CD14-positive monocyte (primary cell): ENCODE measurements at regions of chr6 and their contacts with region 1.

Region 1: DNA sequence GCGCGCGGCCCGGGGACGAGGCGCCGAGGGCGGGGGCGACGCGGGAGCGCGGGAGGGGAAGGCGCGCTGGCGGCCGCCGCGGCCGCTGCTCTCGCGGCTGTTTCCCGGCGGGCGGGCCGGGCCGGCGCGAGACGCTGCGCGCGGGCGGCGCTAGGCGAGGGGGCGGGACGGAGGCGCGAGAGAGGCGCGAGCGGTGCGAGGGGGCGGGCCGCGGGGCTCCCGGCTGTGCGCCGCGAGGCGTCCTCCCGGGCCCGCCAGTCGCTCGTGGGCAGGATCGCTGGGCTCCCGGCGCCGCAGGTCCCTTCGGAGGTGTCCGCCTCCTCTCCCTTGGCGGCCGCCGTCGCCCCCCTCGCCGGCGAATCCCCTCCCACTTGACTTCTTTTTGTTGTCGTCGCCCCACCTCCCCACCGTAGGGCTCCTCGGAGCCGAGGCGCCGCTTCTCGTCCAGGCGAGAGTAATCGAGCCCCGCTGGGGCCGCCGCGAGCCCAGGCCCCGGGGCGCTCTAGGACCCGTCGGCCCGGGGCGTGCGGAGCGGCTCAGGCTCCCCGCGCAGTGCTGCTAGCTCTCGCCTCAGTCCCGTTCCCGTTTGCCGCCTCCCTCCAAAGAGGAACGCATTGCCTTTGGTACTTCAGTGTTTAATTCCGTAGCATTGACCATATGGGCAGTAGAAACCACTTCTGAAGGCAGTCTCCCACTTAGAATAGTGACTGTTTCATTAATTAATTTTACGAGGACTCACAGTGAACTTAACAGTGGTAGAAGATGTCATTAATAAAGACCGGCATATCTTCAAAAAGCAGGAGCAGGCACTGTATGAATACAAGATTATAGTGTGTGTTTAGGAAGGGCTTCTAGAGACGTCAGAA is at the start of gene RANBP9:
- DNase-seq: peak; percentile 53 to 67 (median 65)
- H3K4me3 ChIP-seq: peak within 1 kb of the TSS; percentile 67 to 95 (median 85)
- H3K4me3 Mint-ChIP-seq: peak within 1 kb of the TSS; percentile 97 to 99
- H3K27ac ChIP-seq: peak within 1 kb of the TSS; percentile 86 to 92
- H3K27ac Mint-ChIP-seq: peak within 1 kb of the TSS; percentile 90 to 96 (median 94)
- H3K4me1 ChIP-seq: peaks cover 39 to 54% of the 10 kb centered on the region in 2 donors
- H3K4me1 Mint-ChIP-seq: peaks cover 56% of the 10 kb centered on the region
- H3K27me3 ChIP-seq: no peaks in the 10 kb centered on the region
- H3K27me3 Mint-ChIP-seq: peaks cover 0 to 2% (median 0%) of the 10 kb centered on the region in 3 donors
- CTCF ChIP-seq: no peak
- polyA plus RNA-seq, gene RANBP9: 1.8 to 26.1 (median 2.0) TPM

Region 2: DNA sequence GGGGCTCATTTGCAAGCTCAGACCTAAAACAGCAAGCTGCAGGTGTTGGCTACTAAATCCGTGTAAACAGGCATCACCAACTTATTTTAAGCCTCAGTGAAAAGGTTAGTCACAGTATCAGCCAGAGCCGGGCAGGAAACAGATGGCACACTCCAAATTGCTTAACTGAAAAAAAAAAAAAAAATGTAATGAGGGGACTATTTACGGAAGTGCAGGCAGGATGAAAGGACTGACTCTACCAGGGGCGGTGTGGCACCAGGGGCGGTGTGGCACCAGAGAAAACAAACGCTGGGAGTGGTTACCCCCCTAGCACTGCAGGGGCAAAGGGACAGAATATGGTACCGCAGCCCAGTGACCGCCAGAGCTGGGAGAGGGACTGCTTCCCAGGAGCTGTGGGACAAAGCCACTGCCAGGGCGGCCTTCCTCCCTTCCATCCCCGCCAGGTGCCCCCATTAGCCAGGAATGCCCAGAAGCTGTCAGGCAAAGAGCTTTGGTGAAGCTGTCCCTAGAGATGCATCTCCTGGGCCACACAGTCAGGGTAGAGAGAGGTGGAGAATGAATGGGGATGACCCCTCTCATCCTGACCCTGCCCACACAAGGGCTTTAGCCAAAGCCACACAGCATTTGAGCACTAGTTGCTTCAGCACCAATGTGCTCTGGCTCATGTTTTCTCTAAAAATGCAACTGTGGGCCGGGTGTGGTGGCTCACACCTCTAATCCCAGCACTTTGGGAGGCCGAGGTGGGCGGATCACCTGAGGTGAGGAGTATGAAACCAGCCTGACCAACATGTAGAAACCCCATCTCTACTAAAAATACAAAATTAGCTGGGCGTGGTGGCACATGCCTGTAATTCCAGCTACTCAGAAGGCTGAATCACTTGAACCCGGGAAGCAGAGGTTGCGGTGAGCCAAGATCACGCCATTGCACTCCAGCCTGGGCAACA is 185.0 kb before region 1 on chr6:
- intact Hi-C with region 1: no loop called
- DNase-seq: peak; percentile 83 to 90 (median 90)
- H3K4me3 ChIP-seq: no peak overlapping the region
- H3K4me3 Mint-ChIP-seq: peak overlapping the region in 1 of 2 donors; percentile 51
- H3K27ac ChIP-seq: peak overlapping the region; percentile 79 to 93
- H3K27ac Mint-ChIP-seq: peak overlapping the region; percentile 79 to 91 (median 87)
- H3K4me1 ChIP-seq: peaks cover 32 to 35% of the 10 kb centered on the region in 2 donors
- H3K4me1 Mint-ChIP-seq: peaks cover 40% of the 10 kb centered on the region
- H3K27me3 ChIP-seq: no peaks in the 10 kb centered on the region
- H3K27me3 Mint-ChIP-seq: peaks cover 0 to under 1% (median 0%) of the 10 kb centered on the region in 3 donors
- CTCF ChIP-seq: peak; percentile 3

Region 3: GRCh38 chr6:13668291-13668928 is 43.6 kb before region 1 on chr6:
- intact Hi-C with region 1: loop called in 1 of 2 experiments (anchors 10 kb)
- DNase-seq: peak; percentile 21 to 50 (median 36)
- H3K4me3 ChIP-seq: no peak overlapping the region
- H3K4me3 Mint-ChIP-seq: no peak overlapping the region
- H3K27ac ChIP-seq: no peak overlapping the region
- H3K27ac Mint-ChIP-seq: peak overlapping the region in 6 of 7 donors; percentile 41 to 82 (median 60)
- H3K4me1 ChIP-seq: peaks cover 20 to 36% of the 10 kb centered on the region in 2 donors
- H3K4me1 Mint-ChIP-seq: peaks cover 75% of the 10 kb centered on the region
- H3K27me3 ChIP-seq: no peaks in the 10 kb centered on the region
- H3K27me3 Mint-ChIP-seq: peaks cover 0 to 2% (median 0%) of the 10 kb centered on the region in 3 donors
- CTCF ChIP-seq: no peak

Region 4: GRCh38 chr6:14046476-14047068 is 334.6 kb after region 1 on chr6:
- intact Hi-C with region 1: no loop called
- DNase-seq: peak; percentile 25 to 52 (median 28)
- H3K4me3 ChIP-seq: no peak overlapping the region
- H3K4me3 Mint-ChIP-seq: no peak overlapping the region
- H3K27ac ChIP-seq: no peak overlapping the region
- H3K27ac Mint-ChIP-seq: peak overlapping the region in 1 of 7 donors; percentile 8
- H3K4me1 ChIP-seq: no peaks in the 10 kb centered on the region
- H3K4me1 Mint-ChIP-seq: no peaks in the 10 kb centered on the region
- H3K27me3 ChIP-seq: no peaks in the 10 kb centered on the region
- H3K27me3 Mint-ChIP-seq: peaks cover 2 to 22% (median 4%) of the 10 kb centered on the region in 3 donors
- CTCF ChIP-seq: peak; percentile 78

Region 5: GRCh38 chr6:14676064-14676463 is 964.1 kb after region 1 on chr6:
- intact Hi-C with region 1: no loop called
- DNase-seq: no peak
- H3K4me3 ChIP-seq: no peak overlapping the region
- H3K4me3 Mint-ChIP-seq: no peak overlapping the region
- H3K27ac ChIP-seq: no peak overlapping the region
- H3K27ac Mint-ChIP-seq: no peak overlapping the region
- H3K4me1 ChIP-seq: peaks cover 0 to 8% of the 10 kb centered on the region in 2 donors
- H3K4me1 Mint-ChIP-seq: peaks cover 9% of the 10 kb centered on the region
- H3K27me3 ChIP-seq: no peaks in the 10 kb centered on the region
- H3K27me3 Mint-ChIP-seq: peaks cover 0 to 2% (median 0%) of the 10 kb centered on the region in 3 donors
- CTCF ChIP-seq: no peak